B cell (primary cell): ENCODE measurements at regions of chr6 and their contacts with region 1.

Region 1: DNA sequence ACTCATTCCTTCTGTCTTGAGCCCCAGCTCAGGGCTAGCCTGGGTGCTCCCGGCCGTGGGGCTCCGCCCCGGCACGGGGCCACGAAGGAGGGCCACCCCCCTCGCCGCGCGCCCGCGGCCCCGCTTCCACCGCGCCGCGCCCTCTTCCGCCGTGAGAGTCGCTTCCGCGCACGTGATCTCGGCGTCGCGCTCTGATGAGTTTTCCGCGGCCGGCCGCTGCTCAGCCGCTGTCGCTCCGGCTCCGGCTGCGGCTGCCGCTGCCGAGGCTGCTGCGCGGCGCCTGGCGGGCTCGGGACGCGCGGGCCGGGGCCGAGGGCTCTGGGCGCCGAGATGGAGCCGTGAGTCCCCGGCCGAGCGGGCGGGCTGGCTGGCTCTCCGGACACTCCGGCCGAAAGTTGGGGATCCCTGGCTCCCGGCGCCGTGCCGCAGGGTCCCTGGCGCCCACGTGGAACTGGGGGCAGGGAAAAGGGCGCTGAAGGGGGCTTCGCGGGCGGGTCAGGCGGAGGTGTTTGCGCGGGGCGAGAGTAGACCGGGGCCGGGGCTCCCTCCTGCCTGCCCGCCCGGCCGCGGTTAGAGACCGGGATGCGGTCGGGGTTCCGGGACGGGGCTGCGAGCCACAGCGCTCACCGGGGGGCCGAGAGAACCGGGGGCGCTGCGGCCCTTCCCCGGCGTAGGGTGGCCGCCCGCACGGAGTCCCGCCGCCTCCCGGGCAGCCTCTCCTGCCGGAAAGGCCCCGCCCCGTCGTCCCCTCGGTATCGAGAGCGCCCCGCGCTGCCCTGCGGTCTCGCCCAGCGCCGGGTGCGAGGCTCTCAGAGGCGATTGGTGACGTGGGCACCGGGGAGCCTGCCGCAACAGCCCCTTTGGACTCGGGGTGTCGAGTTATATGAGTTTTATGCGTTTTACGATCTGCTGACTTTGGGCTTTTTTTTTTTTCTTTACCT is at the start of gene TMEM181:
- DNase-seq: peak; percentile 92
- ATAC-seq: peak; percentile 89
- H3K4me3 ChIP-seq: peak within 1 kb of the TSS; percentile 54 to 83 (median 75)
- H3K4me3 Mint-ChIP-seq: peak within 1 kb of the TSS; percentile 84
- H3K27ac ChIP-seq: peak within 1 kb of the TSS; percentile 62 to 76
- H3K27ac Mint-ChIP-seq: peak within 1 kb of the TSS; percentile 82
- H3K4me1 ChIP-seq: peaks cover 15 to 21% of the 10 kb centered on the region in 2 donors
- H3K4me1 Mint-ChIP-seq: peaks cover 28% of the 10 kb centered on the region
- H3K27me3 ChIP-seq: no peaks in the 10 kb centered on the region
- H3K27me3 Mint-ChIP-seq: no peaks in the 10 kb centered on the region
- CTCF ChIP-seq: no peak
- total RNA-seq, gene TMEM181: 9.3 and 9.6 TPM in 2 replicates

Region 2: DNA sequence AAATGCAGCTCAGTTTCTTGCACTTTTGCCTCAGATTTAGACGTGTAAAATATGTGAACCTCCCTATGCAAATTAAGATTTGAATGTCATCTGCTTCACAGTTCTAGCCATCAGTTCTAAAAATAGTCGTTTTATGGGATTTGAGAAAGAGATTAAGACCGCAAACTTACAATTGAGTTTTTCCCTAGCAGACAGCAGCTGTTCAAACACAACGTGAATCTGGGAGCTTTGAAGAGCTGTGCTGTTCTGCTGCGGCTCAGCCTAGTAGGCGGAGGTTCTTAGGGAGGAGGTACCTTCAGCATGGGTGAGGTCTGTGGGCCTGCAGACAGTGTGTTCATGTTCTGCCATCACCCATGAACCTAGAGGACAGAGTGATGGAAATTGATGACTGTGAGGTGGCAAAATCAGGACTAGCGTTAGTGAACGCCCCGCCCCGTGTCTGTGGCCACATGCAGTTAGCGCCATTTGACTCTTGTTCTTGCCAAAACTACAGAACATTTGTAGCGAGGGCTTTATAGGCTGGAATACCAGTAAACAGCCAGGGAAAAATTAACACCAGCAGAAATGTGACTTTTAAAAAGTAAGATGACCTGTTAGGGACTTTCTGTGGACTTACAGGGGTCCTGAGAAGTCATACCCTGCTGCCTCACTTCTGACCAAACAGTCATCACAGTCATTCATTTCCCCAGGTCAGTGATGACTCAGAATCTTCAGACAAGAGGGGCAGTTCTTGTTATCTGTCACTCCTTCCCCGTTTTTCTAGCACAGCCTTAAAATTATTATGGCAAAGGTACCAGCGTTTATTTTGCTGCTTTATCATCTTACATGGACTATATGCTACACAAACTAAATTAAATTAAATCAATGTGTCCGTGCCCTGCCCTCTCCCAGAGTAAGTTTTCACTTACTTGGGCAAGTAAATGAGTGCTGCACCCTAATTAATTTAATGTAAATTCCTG is 84.5 kb before region 1 on chr6:
- CTCF ChIA-PET with region 1: no interaction called
- POLR2A ChIA-PET with region 1: no interaction called
- intact Hi-C with region 1: loop called (anchors 10 kb)
- DNase-seq: peak; percentile 25
- ATAC-seq: peak; percentile 54
- H3K4me3 ChIP-seq: no peak overlapping the region
- H3K4me3 Mint-ChIP-seq: peak overlapping the region; percentile 46
- H3K27ac ChIP-seq: no peak overlapping the region
- H3K27ac Mint-ChIP-seq: peak overlapping the region; percentile 69
- H3K4me1 ChIP-seq: peaks cover 4 to 23% of the 10 kb centered on the region in 2 donors
- H3K4me1 Mint-ChIP-seq: peaks cover 36% of the 10 kb centered on the region
- H3K27me3 ChIP-seq: no peaks in the 10 kb centered on the region
- H3K27me3 Mint-ChIP-seq: no peaks in the 10 kb centered on the region
- CTCF ChIP-seq: no peak

Region 3: GRCh38 chr6:158536084-158536890 is 23.9 kb before region 1 on chr6:
- CTCF ChIA-PET with region 1: no interaction called
- POLR2A ChIA-PET with region 1: no interaction called
- intact Hi-C with region 1: loop called (anchors 1 kb)
- DNase-seq: peak; percentile 77
- ATAC-seq: peak; percentile 56
- H3K4me3 ChIP-seq: peak overlapping the region in 4 of 5 experiments; percentile 6 to 57 (median 48)
- H3K4me3 Mint-ChIP-seq: peak overlapping the region; percentile 71
- H3K27ac ChIP-seq: no peak overlapping the region
- H3K27ac Mint-ChIP-seq: no peak overlapping the region
- H3K4me1 ChIP-seq: peaks cover 8 to 18% of the 10 kb centered on the region in 2 donors
- H3K4me1 Mint-ChIP-seq: peaks cover 6% of the 10 kb centered on the region
- H3K27me3 ChIP-seq: peaks cover 0 to 65% (median 29%) of the 10 kb centered on the region in 4 experiments
- H3K27me3 Mint-ChIP-seq: peaks cover 58% of the 10 kb centered on the region
- CTCF ChIP-seq: no peak